ENCODE measurements at regions of chr14 and their contacts with region 1.

Region 1: DNA sequence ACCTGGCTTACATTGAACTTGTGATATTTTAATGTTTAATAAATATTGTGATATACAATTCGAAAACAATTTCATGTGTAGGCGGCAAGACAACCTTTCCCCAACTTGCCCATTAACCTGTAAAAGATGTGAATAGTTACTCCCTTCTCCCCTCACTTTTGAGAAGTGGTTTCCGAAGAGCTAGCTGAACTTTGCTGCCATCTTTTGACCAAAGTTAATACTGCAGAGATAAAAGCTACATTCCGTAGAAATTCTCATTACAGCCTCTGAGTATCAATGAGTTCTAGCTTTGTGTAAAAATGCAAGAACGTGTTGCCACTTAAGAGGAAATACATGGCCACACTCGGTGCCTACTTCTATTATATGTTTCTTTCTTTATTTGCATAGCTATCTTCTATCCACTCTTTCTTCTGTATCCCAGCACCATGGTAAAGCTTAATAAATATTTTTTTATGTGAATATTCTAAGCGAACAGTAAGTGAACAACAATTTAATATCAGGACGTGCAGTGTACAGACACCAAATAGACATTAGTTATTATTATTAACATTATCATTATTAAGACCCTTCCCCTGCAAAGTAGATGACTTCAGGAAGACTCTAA is 105.1 kb upstream of the TMEM260 start:
- DNase-seq: peak; percentile 56
- H3K4me3 Mint-ChIP-seq: no peak overlapping the region
- H3K27ac Mint-ChIP-seq: no peak overlapping the region
- H3K4me1 Mint-ChIP-seq: peaks cover 5% of the 10 kb centered on the region
- H3K27me3 Mint-ChIP-seq: peaks cover 18% of the 10 kb centered on the region
- CTCF ChIP-seq: peak; percentile 82

Region 2: GRCh38 chr14:55270832-55271565 is 1203.5 kb before region 1 on chr14 and contains the start of gene FBXO34:
- CTCF ChIA-PET with region 1: no interaction called
- POLR2A ChIA-PET with region 1: no interaction called
- intact Hi-C with region 1: loop called (anchors 1 kb)
- DNase-seq: peak; percentile 99
- H3K4me3 Mint-ChIP-seq: peak within 1 kb of the TSS; percentile 82
- H3K27ac Mint-ChIP-seq: peak within 1 kb of the TSS; percentile 92
- H3K4me1 Mint-ChIP-seq: peaks cover 26% of the 10 kb centered on the region
- H3K27me3 Mint-ChIP-seq: no peaks in the 10 kb centered on the region
- CTCF ChIP-seq: peak; percentile 98
- total RNA-seq, gene FBXO34: 12.0 and 13.7 TPM in 2 replicates

Region 3: GRCh38 chr14:55446218-55446654 is 1028.3 kb before region 1 on chr14:
- CTCF ChIA-PET with region 1: interaction called, 19 read pairs
- POLR2A ChIA-PET with region 1: no interaction called
- intact Hi-C with region 1: no loop called
- DNase-seq: peak; percentile 89
- H3K4me3 Mint-ChIP-seq: no peak overlapping the region
- H3K27ac Mint-ChIP-seq: no peak overlapping the region
- H3K4me1 Mint-ChIP-seq: peaks cover 31% of the 10 kb centered on the region
- H3K27me3 Mint-ChIP-seq: no peaks in the 10 kb centered on the region
- CTCF ChIP-seq: peak; percentile 65

Region 4: DNA sequence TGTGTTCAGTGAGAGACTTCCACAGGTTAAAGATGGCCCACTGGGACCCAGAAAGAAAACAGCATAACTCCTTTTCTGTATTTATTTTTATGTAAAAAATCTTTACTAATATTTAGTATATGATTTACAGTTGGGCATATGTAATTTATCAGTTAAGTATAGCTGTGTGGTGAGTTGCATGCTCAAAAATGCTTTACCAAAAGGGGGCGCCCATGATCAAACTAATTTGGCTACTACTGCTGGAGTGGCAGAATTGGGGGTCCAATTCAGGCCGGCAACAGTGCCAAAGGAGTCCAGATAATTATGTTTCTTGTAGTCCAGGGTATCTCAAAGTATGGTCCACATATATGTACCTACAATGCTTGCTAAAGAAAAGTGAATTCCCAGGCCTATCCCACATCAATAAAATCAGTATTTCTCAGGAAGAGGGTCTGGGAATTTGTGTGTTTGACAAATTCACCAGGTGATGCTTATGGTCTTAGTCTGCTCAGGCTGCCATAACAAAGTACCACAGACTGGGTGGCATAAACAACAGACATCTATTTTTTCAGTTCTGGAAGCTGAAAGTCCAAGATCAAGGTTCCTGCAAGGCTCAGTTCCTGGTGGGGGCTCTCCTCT is 742.5 kb before region 1 on chr14:
- CTCF ChIA-PET with region 1: interaction called, 7 read pairs
- POLR2A ChIA-PET with region 1: interaction called, 3 read pairs
- intact Hi-C with region 1: loop called (anchors 1 kb)
- DNase-seq: peak; percentile 54
- H3K4me3 Mint-ChIP-seq: no peak overlapping the region
- H3K27ac Mint-ChIP-seq: no peak overlapping the region
- H3K4me1 Mint-ChIP-seq: peaks cover 6% of the 10 kb centered on the region
- H3K27me3 Mint-ChIP-seq: no peaks in the 10 kb centered on the region
- CTCF ChIP-seq: peak; percentile 46

Region 5: GRCh38 chr14:55864890-55865655 is 609.4 kb before region 1 on chr14:
- CTCF ChIA-PET with region 1: no interaction called
- POLR2A ChIA-PET with region 1: no interaction called
- intact Hi-C with region 1: loop called (anchors 1 kb)
- DNase-seq: peak; percentile 36
- H3K4me3 Mint-ChIP-seq: no peak overlapping the region
- H3K27ac Mint-ChIP-seq: no peak overlapping the region
- H3K4me1 Mint-ChIP-seq: no peaks in the 10 kb centered on the region
- H3K27me3 Mint-ChIP-seq: no peaks in the 10 kb centered on the region
- CTCF ChIP-seq: no peak

Region 6: GRCh38 chr14:56181681-56182085 is 292.8 kb before region 1 on chr14:
- CTCF ChIA-PET with region 1: no interaction called
- POLR2A ChIA-PET with region 1: no interaction called
- intact Hi-C with region 1: no loop called
- DNase-seq: peak; percentile 51
- H3K4me3 Mint-ChIP-seq: no peak overlapping the region
- H3K27ac Mint-ChIP-seq: no peak overlapping the region
- H3K4me1 Mint-ChIP-seq: no peaks in the 10 kb centered on the region
- H3K27me3 Mint-ChIP-seq: no peaks in the 10 kb centered on the region
- CTCF ChIP-seq: no peak

Region 7: GRCh38 chr14:56339855-56340701 is 134.4 kb before region 1 on chr14:
- CTCF ChIA-PET with region 1: interaction called, 10 read pairs
- POLR2A ChIA-PET with region 1: no interaction called
- intact Hi-C with region 1: no loop called
- DNase-seq: peak; percentile 91
- H3K4me3 Mint-ChIP-seq: no peak overlapping the region
- H3K27ac Mint-ChIP-seq: no peak overlapping the region
- H3K4me1 Mint-ChIP-seq: peaks cover 9% of the 10 kb centered on the region
- H3K27me3 Mint-ChIP-seq: no peaks in the 10 kb centered on the region
- CTCF ChIP-seq: peak; percentile 45

Region 8: DNA sequence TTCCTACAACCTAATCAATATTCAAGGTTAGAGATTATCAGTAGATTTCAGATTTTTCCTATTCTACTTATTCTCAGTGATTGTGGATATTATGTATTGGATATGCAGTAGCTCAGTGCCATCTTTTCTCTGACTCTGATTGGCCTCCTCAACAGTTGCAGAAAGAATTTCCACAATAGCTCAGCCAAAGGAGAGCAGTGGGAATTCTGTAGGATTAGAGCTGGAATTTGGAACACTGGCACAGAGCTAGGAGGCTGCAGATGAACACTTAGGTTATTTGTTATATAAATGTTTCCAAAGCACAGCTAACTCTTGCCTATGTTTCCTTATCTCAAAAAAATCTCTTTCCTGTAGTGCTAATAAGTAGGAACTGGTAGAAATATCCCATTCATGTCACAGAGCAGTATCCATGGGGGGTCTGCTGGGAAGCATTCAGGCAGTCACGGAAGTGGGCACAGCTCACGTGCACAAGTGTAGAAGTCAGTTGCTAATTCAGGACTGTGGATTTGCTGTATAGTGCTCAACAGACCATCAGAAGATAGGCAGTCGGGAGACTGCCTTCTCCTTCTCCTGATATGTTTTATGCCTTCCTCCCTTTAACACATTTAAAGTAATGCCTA is 11.1 kb before region 1 on chr14:
- CTCF ChIA-PET with region 1: interaction called, 21 read pairs
- POLR2A ChIA-PET with region 1: no interaction called
- intact Hi-C with region 1: no loop called
- DNase-seq: no peak
- H3K4me3 Mint-ChIP-seq: no peak overlapping the region
- H3K27ac Mint-ChIP-seq: no peak overlapping the region
- H3K4me1 Mint-ChIP-seq: no peaks in the 10 kb centered on the region
- H3K27me3 Mint-ChIP-seq: peaks cover 13% of the 10 kb centered on the region
- CTCF ChIP-seq: no peak